Gastrocnemius medialis (tissue), 4 donors: ENCODE measurements at regions of chr10 and their contacts with region 1.

Region 1: GRCh38 chr10:114577133-114577532 is 80.9 kb downstream of the ABLIM1 start:
- DNase-seq: peak; percentile 26 to 32
- ATAC-seq: peak; percentile 60 to 74
- H3K4me3 ChIP-seq: no peak overlapping the region
- H3K27ac ChIP-seq: peak overlapping the region; percentile 65 to 75 (median 72)
- H3K4me1 ChIP-seq: peaks cover 22% of the 10 kb centered on the region in 2 donors
- H3K27me3 ChIP-seq: no peaks in the 10 kb centered on the region
- CTCF ChIP-seq: no peak
- POLR2A ChIP-seq: peak in 1 of 2 donors; percentile 31

Region 2: DNA sequence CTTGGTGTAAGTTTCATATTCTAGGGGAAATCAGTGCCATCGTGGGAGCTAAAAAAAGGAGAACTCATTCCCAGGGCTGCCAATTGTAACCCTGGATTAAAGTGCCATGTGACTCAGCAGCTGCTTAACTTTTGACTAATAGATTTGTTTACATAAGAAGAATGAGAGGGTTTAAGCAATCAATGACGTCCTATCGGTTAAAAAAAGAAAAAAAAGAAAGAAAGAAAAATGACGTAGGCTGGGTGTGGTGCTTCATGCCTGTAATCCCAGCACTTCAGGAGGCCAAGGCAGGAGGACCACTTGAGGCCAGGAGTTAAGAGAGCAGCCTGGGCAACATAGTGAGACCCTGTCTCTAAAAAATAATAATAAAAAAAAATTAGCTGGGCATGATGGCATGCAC is 56.7 kb before region 1 on chr10:
- in situ Hi-C with region 1: no loop called
- intact Hi-C with region 1: no loop called
- DNase-seq: peak in 1 of 2 donors; percentile 28
- ATAC-seq: peak in 1 of 2 donors; percentile 47
- H3K4me3 ChIP-seq: no peak overlapping the region
- H3K27ac ChIP-seq: peak overlapping the region; percentile 47 to 66 (median 56)
- H3K4me1 ChIP-seq: peaks cover 5 to 16% of the 10 kb centered on the region in 2 donors
- H3K27me3 ChIP-seq: no peaks in the 10 kb centered on the region
- CTCF ChIP-seq: no peak
- POLR2A ChIP-seq: peak in 1 of 2 donors; percentile 28

Region 3: GRCh38 chr10:114613237-114613979 is 36.3 kb after region 1 on chr10:
- in situ Hi-C with region 1: no loop called
- intact Hi-C with region 1: loop called (anchors 5 kb)
- DNase-seq: no peak
- ATAC-seq: no peak
- H3K4me3 ChIP-seq: no peak overlapping the region
- H3K27ac ChIP-seq: peak overlapping the region; percentile 38 to 76 (median 68)
- H3K4me1 ChIP-seq: peaks cover 12 to 45% of the 10 kb centered on the region in 2 donors
- H3K27me3 ChIP-seq: no peaks in the 10 kb centered on the region
- CTCF ChIP-seq: no peak
- POLR2A ChIP-seq: no peak